Breast epithelium (tissue), 4 donors: ENCODE measurements at regions of chr2 and their contacts with region 1.

Region 1: GRCh38 chr2:219597552-219598307 is at the start of gene STK11IP:
- DNase-seq: peak; percentile 95 to 96
- H3K4me3 ChIP-seq: peak within 1 kb of the TSS; percentile 56 to 75 (median 64)
- H3K27ac ChIP-seq: peak within 1 kb of the TSS; percentile 80 to 89
- H3K4me1 ChIP-seq: no peaks in the 10 kb centered on the region
- H3K27me3 ChIP-seq: no peaks in the 10 kb centered on the region
- CTCF ChIP-seq: no peak
- POLR2A ChIP-seq: peak; percentile 49
- total RNA-seq, gene STK11IP: 11.2 to 16.7 (median 15.7) TPM

Region 2: GRCh38 chr2:218360447-218360846 is 1237.3 kb before region 1 on chr2:
- intact Hi-C with region 1: loop called (anchors 5 kb)
- DNase-seq: no peak
- H3K4me3 ChIP-seq: no peak overlapping the region
- H3K27ac ChIP-seq: no peak overlapping the region
- H3K4me1 ChIP-seq: no peaks in the 10 kb centered on the region
- H3K27me3 ChIP-seq: no peaks in the 10 kb centered on the region
- CTCF ChIP-seq: no peak
- POLR2A ChIP-seq: no peak

Region 3: GRCh38 chr2:219543601-219544358 is 54.0 kb before region 1 on chr2 and contains the starts of genes CHPF and TMEM198:
- intact Hi-C with region 1: loop called (anchors 5 kb)
- DNase-seq: peak; percentile 98 to 99
- H3K4me3 ChIP-seq: peak within 1 kb of the TSS; percentile 62 to 85 (median 78)
- H3K27ac ChIP-seq: peak within 1 kb of the TSS; percentile 90 to 91
- H3K4me1 ChIP-seq: peaks cover 0 to 8% of the 10 kb centered on the region in 2 donors
- H3K27me3 ChIP-seq: no peaks in the 10 kb centered on the region
- CTCF ChIP-seq: peak in 1 of 3 donors; percentile 9
- POLR2A ChIP-seq: peak; percentile 15
- total RNA-seq, gene CHPF: 46.5 to 58.9 (median 49.0) TPM
- total RNA-seq, gene TMEM198: 1.6 to 1.9 (median 1.8) TPM

Region 4: DNA sequence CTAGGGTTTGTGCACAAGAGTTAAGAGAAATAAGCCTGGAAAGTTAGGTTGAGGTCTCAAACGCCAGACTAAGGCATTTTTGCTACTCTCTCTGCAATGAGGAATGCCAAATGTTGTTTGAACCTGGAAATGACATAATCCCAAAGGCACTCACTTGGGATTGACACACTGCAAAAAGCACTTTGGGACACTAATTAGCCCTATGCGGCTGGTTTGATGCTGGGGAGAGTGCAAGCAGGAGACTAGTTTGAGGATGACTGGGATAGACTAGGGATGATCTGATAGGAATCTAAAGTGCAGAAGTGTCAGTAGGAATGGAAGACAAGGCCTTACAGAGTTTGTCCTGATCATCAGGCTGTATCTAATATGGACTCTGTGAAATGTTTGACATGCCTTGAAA is 498.7 kb after region 1 on chr2:
- intact Hi-C with region 1: no loop called
- DNase-seq: no peak
- H3K4me3 ChIP-seq: no peak overlapping the region
- H3K27ac ChIP-seq: no peak overlapping the region
- H3K4me1 ChIP-seq: no peaks in the 10 kb centered on the region
- H3K27me3 ChIP-seq: no peaks in the 10 kb centered on the region
- CTCF ChIP-seq: no peak
- POLR2A ChIP-seq: no peak

Region 5: DNA sequence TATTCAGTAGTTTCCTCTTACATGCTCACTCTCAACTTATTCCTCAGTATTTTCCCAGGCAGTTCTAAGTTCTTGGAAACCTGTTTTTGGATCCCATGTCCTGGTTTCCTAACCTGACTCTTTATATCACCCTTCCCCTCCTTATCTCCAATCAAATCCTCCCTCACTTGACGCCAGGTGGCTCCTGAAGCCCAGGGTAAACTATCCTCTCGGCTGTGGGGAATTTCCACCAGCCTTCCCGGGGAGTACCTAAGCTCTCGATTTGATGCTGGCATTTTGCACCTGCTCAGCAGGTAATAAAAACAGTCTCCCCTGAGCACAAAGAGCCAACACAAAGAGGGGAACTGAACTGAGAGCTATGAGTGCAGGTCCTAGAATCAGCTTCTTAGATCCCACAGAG is 567.7 kb after region 1 on chr2:
- intact Hi-C with region 1: no loop called
- DNase-seq: no peak
- H3K4me3 ChIP-seq: no peak overlapping the region
- H3K27ac ChIP-seq: no peak overlapping the region
- H3K4me1 ChIP-seq: no peaks in the 10 kb centered on the region
- H3K27me3 ChIP-seq: no peaks in the 10 kb centered on the region
- CTCF ChIP-seq: peak in 2 of 3 donors; percentile 20 to 27
- POLR2A ChIP-seq: no peak